ENCODE measurements at regions of chr6 and their contacts with region 1.

Region 1: GRCh38 chr6:43477235-43478007 is at the start of gene TJAP1:
- DNase-seq: peak; percentile 98
- ATAC-seq: peak; percentile 99
- H3K4me3 Mint-ChIP-seq: peak within 1 kb of the TSS; percentile 98
- H3K27ac Mint-ChIP-seq: peak within 1 kb of the TSS; percentile 82
- H3K4me1 Mint-ChIP-seq: peaks cover 38% of the 10 kb centered on the region
- H3K27me3 Mint-ChIP-seq: no peaks in the 10 kb centered on the region
- total RNA-seq, gene TJAP1: 35.6 to 37.2 TPM

Region 2: DNA sequence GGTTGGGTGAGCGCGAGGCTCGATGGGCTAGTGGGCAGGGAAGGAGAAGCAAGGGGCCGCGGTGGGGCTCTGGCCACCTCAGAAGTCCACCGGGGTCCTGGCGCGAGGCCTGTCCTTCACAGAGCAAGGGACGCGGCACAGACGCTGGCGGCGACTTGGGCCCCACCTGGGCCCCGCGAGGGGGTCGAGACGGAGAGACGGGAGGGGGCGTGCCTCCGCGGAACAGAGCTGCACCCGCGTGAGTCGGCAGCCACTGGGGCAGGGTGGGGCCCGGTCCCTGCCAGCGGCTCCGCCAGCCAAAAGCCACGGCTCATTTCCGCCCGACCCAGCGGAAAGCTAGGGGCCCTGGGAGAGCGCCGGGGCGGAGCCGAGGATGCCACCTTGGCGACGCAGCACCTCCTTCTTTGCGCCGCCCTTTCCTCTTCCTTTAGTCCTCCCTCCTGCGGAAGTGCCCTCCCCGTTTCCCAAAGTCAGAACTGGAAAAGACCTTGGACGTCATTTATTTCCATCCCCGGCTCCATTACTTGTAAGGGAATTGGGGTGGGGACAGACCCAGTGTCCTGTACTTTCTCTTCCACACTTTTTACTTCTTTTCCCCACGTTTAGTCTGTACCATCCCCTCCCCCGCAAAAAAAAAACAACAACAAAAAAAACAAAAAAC is 423.7 kb before region 1 on chr6 and contains the start of gene CUL7:
- CTCF ChIA-PET with region 1: no interaction called
- POLR2A ChIA-PET with region 1: no interaction called
- intact Hi-C with region 1: loop called in 1 of 2 experiments (anchors 5 kb)
- DNase-seq: peak; percentile 96
- ATAC-seq: peak; percentile 99
- H3K4me3 Mint-ChIP-seq: peak within 1 kb of the TSS; percentile 99
- H3K27ac Mint-ChIP-seq: peak within 1 kb of the TSS; percentile 97
- H3K4me1 Mint-ChIP-seq: peaks cover 43% of the 10 kb centered on the region
- H3K27me3 Mint-ChIP-seq: no peaks in the 10 kb centered on the region
- total RNA-seq, gene CUL7: 16.3 to 18.0 TPM

Region 3: DNA sequence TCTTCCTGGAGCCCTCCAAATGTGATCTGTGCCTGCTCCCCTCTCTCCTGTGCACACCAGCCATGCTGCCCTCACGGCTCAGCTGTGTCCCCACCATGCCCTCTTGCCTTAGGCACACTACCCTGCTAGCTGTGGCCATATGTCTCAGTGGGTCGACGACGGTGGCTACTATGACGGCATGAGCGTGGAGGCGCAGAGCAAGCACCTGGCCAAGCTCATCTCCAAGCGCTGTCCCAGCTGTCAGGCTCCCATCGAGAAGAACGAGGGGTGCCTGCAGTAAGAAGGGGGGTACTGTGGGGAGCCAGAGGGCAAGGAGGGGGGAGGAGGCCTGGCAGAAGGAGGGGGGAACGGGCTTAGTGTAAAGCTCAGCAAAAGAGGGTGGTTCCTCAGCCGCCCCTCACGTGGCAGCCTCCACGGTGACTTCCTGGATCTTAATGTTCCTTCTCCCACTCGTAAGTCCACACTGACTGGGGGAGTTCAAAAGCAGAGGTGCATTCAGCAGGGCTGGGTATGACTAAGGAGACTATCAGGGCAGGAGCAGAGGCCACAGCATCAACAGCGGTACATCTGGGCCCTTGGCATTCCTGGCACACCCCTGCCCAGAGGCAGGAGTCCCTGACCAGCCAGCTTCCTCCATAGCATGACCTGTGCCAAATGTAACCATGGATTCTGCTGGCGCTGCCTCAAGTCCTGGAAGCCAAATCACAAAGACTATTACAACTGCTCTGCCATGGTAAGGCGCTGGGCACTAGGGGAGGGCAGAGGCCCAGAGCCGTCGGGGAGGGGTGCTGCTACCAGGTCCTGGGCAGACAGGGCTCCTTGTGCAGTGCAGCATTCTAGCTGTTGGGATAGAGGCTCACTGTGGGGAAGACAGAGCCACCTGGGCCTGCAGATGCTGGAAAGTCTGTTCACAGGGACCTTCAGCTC is 256.1 kb before region 1 on chr6:
- CTCF ChIA-PET with region 1: no interaction called
- POLR2A ChIA-PET with region 1: no interaction called
- intact Hi-C with region 1: loop called in 1 of 2 experiments (anchors 5 kb)
- DNase-seq: no peak
- ATAC-seq: no peak
- H3K4me3 Mint-ChIP-seq: no peak overlapping the region
- H3K27ac Mint-ChIP-seq: peak overlapping the region; percentile 16
- H3K4me1 Mint-ChIP-seq: peaks cover 38% of the 10 kb centered on the region
- H3K27me3 Mint-ChIP-seq: no peaks in the 10 kb centered on the region

Region 4: GRCh38 chr6:43386492-43386891 is 90.9 kb before region 1 on chr6:
- CTCF ChIA-PET with region 1: interaction called, 3 read pairs
- POLR2A ChIA-PET with region 1: no interaction called
- intact Hi-C with region 1: loop called in 1 of 2 experiments (anchors 1 kb)
- DNase-seq: no peak
- ATAC-seq: no peak
- H3K4me3 Mint-ChIP-seq: no peak overlapping the region
- H3K27ac Mint-ChIP-seq: peak overlapping the region; percentile 6
- H3K4me1 Mint-ChIP-seq: peaks cover 59% of the 10 kb centered on the region
- H3K27me3 Mint-ChIP-seq: peaks cover 2% of the 10 kb centered on the region

Region 5: DNA sequence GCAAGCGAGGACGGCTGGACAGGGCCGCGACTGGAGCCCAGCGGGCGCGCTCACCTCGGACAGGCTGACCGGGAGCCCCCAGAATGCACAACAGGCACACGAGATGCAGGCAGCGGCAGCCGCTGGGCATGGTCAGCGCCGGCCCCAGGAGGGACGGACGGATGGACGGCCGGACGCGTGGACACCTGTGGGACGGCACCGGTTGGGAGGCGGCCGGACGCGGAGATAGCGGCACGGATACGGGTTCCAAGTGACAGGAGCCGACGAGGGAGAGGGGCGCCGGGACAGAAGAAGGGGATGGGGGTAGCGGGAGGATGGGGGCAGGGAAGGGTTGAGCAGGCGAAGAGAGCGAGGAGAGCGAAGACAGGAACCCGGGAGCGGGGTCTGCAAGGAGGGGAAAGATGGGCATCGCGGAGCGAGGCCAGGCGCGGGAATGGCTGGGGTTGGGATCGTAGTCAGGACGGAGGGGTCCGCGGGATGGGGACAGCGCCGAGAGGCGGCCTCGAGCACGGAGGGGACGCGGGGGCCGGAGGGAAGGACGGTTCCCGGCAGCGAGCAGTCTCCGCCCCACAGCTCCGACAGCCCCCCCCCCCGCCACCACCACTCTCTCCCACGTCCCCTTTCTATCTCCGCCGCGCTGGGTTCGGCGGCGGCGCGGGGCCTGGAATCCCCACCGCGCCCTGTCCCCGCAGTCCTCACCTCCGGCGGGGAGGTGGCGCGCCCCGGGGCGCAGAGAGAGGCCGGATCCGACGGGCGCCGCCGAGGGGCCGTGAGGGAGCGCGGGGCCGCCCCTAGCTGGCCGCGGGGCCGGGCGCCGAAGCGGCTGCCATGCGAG is 22.5 kb before region 1 on chr6:
- CTCF ChIA-PET with region 1: interaction called, 6 read pairs
- POLR2A ChIA-PET with region 1: interaction called, 3 read pairs
- intact Hi-C with region 1: loop called (anchors 1 to 2 kb)
- DNase-seq: peak; percentile 46
- ATAC-seq: peak; percentile 67
- H3K4me3 Mint-ChIP-seq: peak overlapping the region; percentile 72
- H3K27ac Mint-ChIP-seq: no peak overlapping the region
- H3K4me1 Mint-ChIP-seq: peaks cover 15% of the 10 kb centered on the region
- H3K27me3 Mint-ChIP-seq: peaks cover 3% of the 10 kb centered on the region